Cardiac septum (tissue), 1 donor: ENCODE measurements at regions of chr3 and their contacts with region 1.

Region 1: GRCh38 chr3:197186887-197187588 is 111.4 kb downstream of the DLG1 start:
- DNase-seq: no peak

Region 2: GRCh38 chr3:196979545-196979944 is 207.5 kb before region 1 on chr3:
- intact Hi-C with region 1: loop called (anchors 5 kb)
- DNase-seq: peak; percentile 38